ENCODE measurements at regions of chr2 and their contacts with region 1.

Region 1: DNA sequence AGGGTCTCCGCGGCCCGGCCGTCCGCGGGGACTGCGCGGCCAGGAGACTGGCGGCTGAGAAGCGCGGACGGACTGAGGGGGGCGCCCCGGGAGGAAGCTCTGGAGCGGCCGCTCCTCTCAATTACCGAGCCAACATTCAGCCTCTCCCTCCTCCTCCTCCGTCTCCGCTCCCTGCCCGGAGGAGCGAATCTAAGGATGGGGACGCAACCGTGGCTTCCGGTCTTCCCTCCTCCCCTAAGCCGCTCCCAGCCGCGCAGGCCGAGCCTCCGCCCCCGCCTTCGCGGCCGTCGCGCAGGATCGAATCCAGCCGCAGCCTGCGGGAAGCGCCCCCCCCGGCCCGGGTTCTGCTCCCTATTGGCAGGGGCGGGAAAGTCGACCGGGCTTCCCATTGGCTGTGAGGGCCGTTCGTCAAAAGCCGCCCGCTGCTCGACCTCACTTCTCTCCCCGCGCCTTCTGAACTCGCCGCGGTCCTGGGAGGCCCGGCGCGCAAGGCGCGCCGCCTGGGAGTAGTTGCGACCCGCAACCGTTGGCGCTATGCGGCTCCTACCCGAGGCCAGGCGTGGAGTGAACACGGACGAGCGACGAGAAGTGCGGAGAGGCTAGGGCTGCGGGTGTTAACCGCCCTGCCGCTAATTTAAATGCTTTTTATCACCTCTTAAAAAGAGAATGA is at the start of gene HNRNPLL:
- DNase-seq: peak; percentile 86 to 98 (median 91)
- ATAC-seq: peak; percentile 91
- H3K4me3 ChIP-seq: peak within 1 kb of the TSS; percentile 86
- H3K4me3 Mint-ChIP-seq: peak within 1 kb of the TSS; percentile 88 to 97 (median 95)
- H3K27ac ChIP-seq: peak within 1 kb of the TSS; percentile 72
- H3K27ac Mint-ChIP-seq: peak within 1 kb of the TSS; percentile 82 to 94 (median 90)
- H3K4me1 ChIP-seq: peaks cover 11 to 15% of the 10 kb centered on the region in 2 donors
- H3K4me1 Mint-ChIP-seq: peaks cover 29 to 57% (median 50%) of the 10 kb centered on the region in 7 donors
- H3K27me3 ChIP-seq: no peaks in the 10 kb centered on the region
- H3K27me3 Mint-ChIP-seq: no peaks in the 10 kb centered on the region
- total RNA-seq, gene HNRNPLL: 10.1 to 66.8 (median 30.2) TPM

Region 2: DNA sequence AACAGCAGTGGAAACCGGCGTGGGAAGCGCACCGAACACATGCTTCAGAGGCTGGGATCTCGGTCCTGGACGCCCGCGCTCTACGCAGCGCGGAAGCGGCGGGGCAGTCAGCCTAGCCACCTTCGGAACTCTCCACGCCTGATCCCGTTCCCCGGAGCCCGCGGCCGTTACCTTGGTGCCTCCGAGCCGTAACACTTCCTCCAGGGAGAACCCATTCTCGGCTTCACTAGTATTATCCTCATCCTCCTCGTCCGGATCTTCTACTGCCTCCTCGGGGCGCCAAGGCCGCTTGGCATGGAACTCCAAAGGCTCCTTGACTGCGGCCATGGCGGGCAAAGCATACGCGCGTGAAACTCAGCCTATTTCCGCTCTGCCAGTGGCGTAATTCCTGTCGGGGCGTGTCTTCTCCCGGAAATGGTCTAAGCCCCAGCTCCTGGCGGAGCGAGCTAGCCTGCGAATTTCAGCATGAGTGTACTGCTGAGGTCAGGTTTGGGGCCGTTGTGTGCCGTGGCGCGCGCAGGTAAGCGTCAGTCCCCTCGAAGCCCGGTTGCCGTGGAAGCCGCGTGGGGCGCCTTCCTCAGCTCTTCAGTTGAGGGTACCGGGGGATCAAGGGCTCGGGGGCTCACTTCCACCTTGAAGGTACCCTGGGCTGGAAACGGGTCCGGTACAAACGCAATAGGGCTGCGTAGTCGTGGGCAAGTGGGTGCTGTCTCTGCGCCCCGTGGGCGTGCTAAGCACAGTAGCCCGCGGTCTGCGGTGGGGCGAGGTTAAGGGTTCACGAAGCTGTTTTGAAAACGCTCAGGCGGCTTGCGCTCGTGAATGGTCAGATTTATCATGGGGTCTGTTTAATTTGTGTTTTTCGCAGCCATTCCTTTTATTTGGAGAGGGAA is 1371.4 kb before region 1 on chr2 and contains the starts of genes CEBPZ and NDUFAF7:
- CTCF ChIA-PET with region 1: no interaction called
- POLR2A ChIA-PET with region 1: no interaction called
- intact Hi-C with region 1: no loop called
- DNase-seq: peak; percentile 71 to 87 (median 84)
- ATAC-seq: peak; percentile 95
- H3K4me3 ChIP-seq: peak within 1 kb of the TSS; percentile 84
- H3K4me3 Mint-ChIP-seq: no peak within 1 kb of the TSS
- H3K27ac ChIP-seq: peak within 1 kb of the TSS; percentile 93
- H3K27ac Mint-ChIP-seq: no peak within 1 kb of the TSS
- H3K4me1 ChIP-seq: peaks cover 31 to 39% of the 10 kb centered on the region in 2 donors
- H3K4me1 Mint-ChIP-seq: peaks cover 25 to 54% (median 43%) of the 10 kb centered on the region in 7 donors
- H3K27me3 ChIP-seq: no peaks in the 10 kb centered on the region
- H3K27me3 Mint-ChIP-seq: no peaks in the 10 kb centered on the region
- total RNA-seq, gene CEBPZ: 40.4 to 67.6 (median 56.4) TPM
- total RNA-seq, gene NDUFAF7: 21.6 to 38.2 (median 28.5) TPM

Region 3: DNA sequence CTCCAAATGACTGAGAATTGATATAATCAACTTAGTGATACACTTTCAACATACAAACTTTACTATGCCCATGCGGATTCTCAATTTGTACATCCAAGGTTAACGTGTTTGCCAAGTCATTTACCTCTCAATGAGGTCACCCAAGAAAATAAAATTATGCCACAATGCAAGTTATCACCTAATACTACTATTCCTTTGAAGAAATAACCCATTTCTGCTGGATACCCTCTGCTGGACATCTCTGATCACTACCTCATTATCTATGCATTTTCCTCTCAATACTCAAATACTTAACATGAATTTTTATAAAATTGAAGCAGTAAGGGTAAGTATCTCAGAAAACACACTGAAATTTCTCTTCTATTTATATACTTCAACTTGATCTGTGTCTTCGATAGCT is 12.8 kb before region 1 on chr2:
- CTCF ChIA-PET with region 1: interaction called, 4 read pairs
- POLR2A ChIA-PET with region 1: interaction called, 4 read pairs
- intact Hi-C with region 1: loop called in 1 of 2 experiments (anchors 1 kb)
- DNase-seq: no peak
- ATAC-seq: no peak
- H3K4me3 ChIP-seq: no peak overlapping the region
- H3K4me3 Mint-ChIP-seq: no peak overlapping the region
- H3K27ac ChIP-seq: no peak overlapping the region
- H3K27ac Mint-ChIP-seq: no peak overlapping the region
- H3K4me1 ChIP-seq: peaks cover 0 to 44% of the 10 kb centered on the region in 2 donors
- H3K4me1 Mint-ChIP-seq: peaks cover 6 to 53% (median 15%) of the 10 kb centered on the region in 7 donors
- H3K27me3 ChIP-seq: no peaks in the 10 kb centered on the region
- H3K27me3 Mint-ChIP-seq: no peaks in the 10 kb centered on the region

Region 4: GRCh38 chr2:38643021-38643671 is 40.3 kb after region 1 on chr2:
- CTCF ChIA-PET with region 1: no interaction called
- POLR2A ChIA-PET with region 1: interaction called, 4 read pairs
- intact Hi-C with region 1: loop called (anchors 1 kb)
- DNase-seq: no peak
- ATAC-seq: no peak
- H3K4me3 ChIP-seq: no peak overlapping the region
- H3K4me3 Mint-ChIP-seq: peak overlapping the region in 6 of 10 donors; percentile 74 to 81 (median 76)
- H3K27ac ChIP-seq: no peak overlapping the region
- H3K27ac Mint-ChIP-seq: peak overlapping the region; percentile 85 to 94 (median 88)
- H3K4me1 ChIP-seq: peaks cover 6 to 8% of the 10 kb centered on the region in 2 donors
- H3K4me1 Mint-ChIP-seq: peaks cover 12 to 45% (median 18%) of the 10 kb centered on the region in 7 donors
- H3K27me3 ChIP-seq: no peaks in the 10 kb centered on the region
- H3K27me3 Mint-ChIP-seq: no peaks in the 10 kb centered on the region

Region 5: DNA sequence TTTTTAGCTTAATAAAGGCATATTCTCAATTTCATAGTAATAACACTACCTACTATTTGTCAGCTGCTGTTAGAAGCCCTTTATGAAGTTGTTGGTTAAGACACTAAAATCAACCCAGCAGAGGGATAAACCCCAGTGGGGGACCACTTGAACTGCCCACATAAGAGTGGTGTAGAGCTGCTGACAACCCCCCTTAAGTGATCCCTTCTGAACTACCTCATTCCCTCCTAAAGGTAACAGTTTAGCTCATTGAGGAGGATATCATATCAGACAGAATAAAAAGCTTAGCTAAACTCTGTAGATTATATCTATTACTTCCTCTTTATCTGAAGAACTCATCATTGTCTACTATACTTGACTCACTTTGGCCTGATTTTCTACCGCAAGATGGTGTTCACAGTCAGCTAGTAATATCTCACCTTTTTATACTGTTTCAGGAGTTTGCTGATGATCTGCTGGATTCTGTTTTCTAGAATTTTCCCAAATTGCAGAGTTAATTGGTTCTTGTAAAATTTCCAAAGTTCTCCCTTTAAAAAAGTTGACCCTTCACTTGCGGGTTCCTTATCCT is 79.2 kb after region 1 on chr2:
- CTCF ChIA-PET with region 1: interaction called, 10 read pairs
- POLR2A ChIA-PET with region 1: interaction called, 5 read pairs
- intact Hi-C with region 1: loop called (anchors 1 to 5 kb)
- DNase-seq: peak in 1 of 9 donors; percentile 18
- ATAC-seq: peak; percentile 83
- H3K4me3 ChIP-seq: peak overlapping the region; percentile 17
- H3K4me3 Mint-ChIP-seq: peak overlapping the region in 7 of 10 donors; percentile 12 to 55 (median 27)
- H3K27ac ChIP-seq: peak overlapping the region; percentile 4
- H3K27ac Mint-ChIP-seq: peak overlapping the region; percentile 11 to 82 (median 59)
- H3K4me1 ChIP-seq: peaks cover 14 to 51% of the 10 kb centered on the region in 2 donors
- H3K4me1 Mint-ChIP-seq: peaks cover 8 to 50% (median 32%) of the 10 kb centered on the region in 7 donors
- H3K27me3 ChIP-seq: no peaks in the 10 kb centered on the region
- H3K27me3 Mint-ChIP-seq: no peaks in the 10 kb centered on the region

Region 6: DNA sequence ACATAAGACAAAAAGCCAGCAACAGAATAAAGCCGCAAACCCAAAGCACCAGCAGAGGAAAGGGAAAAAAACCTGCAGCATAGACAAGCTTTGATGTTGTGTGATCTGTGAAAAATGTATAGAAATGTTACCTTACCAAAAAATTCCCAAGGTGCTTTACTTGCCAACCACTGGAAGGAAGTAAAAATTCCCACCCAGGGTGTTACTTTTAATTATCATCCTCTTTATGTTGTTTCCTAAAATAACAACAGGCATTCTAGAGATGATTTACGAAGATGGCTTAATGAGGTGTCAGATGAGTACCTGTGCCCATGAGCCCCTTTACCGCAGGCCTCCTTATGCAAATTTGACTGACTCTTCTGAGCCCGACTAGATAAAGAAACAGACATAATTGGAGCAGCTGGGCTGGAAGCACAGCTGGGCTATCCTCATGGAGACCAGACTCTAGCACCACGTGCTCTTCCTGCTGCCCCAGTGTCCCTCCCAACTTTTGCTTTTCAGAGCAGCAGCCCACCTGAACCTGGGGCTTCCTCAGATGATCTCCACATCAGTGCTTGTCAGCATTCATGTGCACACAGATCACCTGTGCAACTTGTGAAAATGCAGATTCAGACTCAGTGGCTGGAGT is 106.8 kb after region 1 on chr2:
- CTCF ChIA-PET with region 1: no interaction called
- POLR2A ChIA-PET with region 1: interaction called, 3 read pairs
- intact Hi-C with region 1: loop called (anchors 1 kb)
- DNase-seq: peak in 7 of 9 donors; percentile 64 to 81 (median 77)
- ATAC-seq: peak; percentile 87
- H3K4me3 ChIP-seq: peak overlapping the region; percentile 21
- H3K4me3 Mint-ChIP-seq: peak overlapping the region; percentile 67 to 86 (median 73)
- H3K27ac ChIP-seq: peak overlapping the region; percentile 15
- H3K27ac Mint-ChIP-seq: peak overlapping the region; percentile 81 to 95 (median 91)
- H3K4me1 ChIP-seq: peaks cover 24 to 31% of the 10 kb centered on the region in 2 donors
- H3K4me1 Mint-ChIP-seq: peaks cover 23 to 70% (median 58%) of the 10 kb centered on the region in 7 donors
- H3K27me3 ChIP-seq: no peaks in the 10 kb centered on the region
- H3K27me3 Mint-ChIP-seq: no peaks in the 10 kb centered on the region

Region 7: GRCh38 chr2:38740851-38741731 is 138.2 kb after region 1 on chr2:
- CTCF ChIA-PET with region 1: interaction called, 9 read pairs
- POLR2A ChIA-PET with region 1: interaction called, 5 read pairs
- intact Hi-C with region 1: loop called in 1 of 2 experiments (anchors 1 kb)
- DNase-seq: peak in 7 of 9 donors; percentile 31 to 59 (median 53)
- ATAC-seq: peak; percentile 56
- H3K4me3 ChIP-seq: no peak overlapping the region
- H3K4me3 Mint-ChIP-seq: no peak overlapping the region
- H3K27ac ChIP-seq: no peak overlapping the region
- H3K27ac Mint-ChIP-seq: peak overlapping the region in 8 of 9 donors; percentile 3 to 83 (median 70)
- H3K4me1 ChIP-seq: peaks cover 10 to 11% of the 10 kb centered on the region in 2 donors
- H3K4me1 Mint-ChIP-seq: peaks cover 20 to 57% (median 36%) of the 10 kb centered on the region in 7 donors
- H3K27me3 ChIP-seq: no peaks in the 10 kb centered on the region
- H3K27me3 Mint-ChIP-seq: no peaks in the 10 kb centered on the region

Region 8: GRCh38 chr2:38778687-38779082 is 175.8 kb after region 1 on chr2:
- CTCF ChIA-PET with region 1: no interaction called
- POLR2A ChIA-PET with region 1: no interaction called
- intact Hi-C with region 1: loop called in 1 of 2 experiments (anchors 1 kb)
- DNase-seq: no peak
- ATAC-seq: no peak
- H3K4me3 ChIP-seq: peak overlapping the region; percentile 85
- H3K4me3 Mint-ChIP-seq: peak overlapping the region; percentile 94 to 100 (median 98)
- H3K27ac ChIP-seq: peak overlapping the region; percentile 81
- H3K27ac Mint-ChIP-seq: peak overlapping the region; percentile 92 to 99 (median 97)
- H3K4me1 ChIP-seq: peaks cover 0 to 5% of the 10 kb centered on the region in 2 donors
- H3K4me1 Mint-ChIP-seq: peaks cover 8 to 23% (median 17%) of the 10 kb centered on the region in 7 donors
- H3K27me3 ChIP-seq: no peaks in the 10 kb centered on the region
- H3K27me3 Mint-ChIP-seq: peaks cover 5 to 21% (median 17%) of the 10 kb centered on the region in 5 donors

Measured in naive thymus-derived CD4-positive, alpha-beta T cell (primary cell).